ENCODE measurements at regions of chr1 and their contacts with region 1.

Region 1: GRCh38 chr1:153727463-153728304 is at the start of gene INTS3:
- DNase-seq: peak; percentile 98 to 100 (median 100)
- H3K4me3 ChIP-seq: peak within 1 kb of the TSS; percentile 61 to 99 (median 91)
- H3K27ac ChIP-seq: peak within 1 kb of the TSS; percentile 71 to 99 (median 96)
- H3K27me3 ChIP-seq: no peaks in the 10 kb centered on the region
- CTCF ChIP-seq: peak in 26 of 56 donors; percentile 7 to 50 (median 26)
- total RNA-seq, gene INTS3: 56.8 to 103 (median 74.9) TPM

Region 2: GRCh38 chr1:153633716-153634665 is 93.7 kb before region 1 on chr1 and contains the start of gene CHTOP:
- intact Hi-C with region 1: loop called in 1 of 2 experiments (anchors 5 kb)
- DNase-seq: peak; percentile 97 to 99 (median 99)
- H3K4me3 ChIP-seq: peak within 1 kb of the TSS; percentile 72 to 100 (median 93)
- H3K27ac ChIP-seq: peak within 1 kb of the TSS; percentile 80 to 100 (median 99)
- H3K27me3 ChIP-seq: no peaks in the 10 kb centered on the region
- CTCF ChIP-seq: peak in 36 of 56 donors; percentile 2 to 58 (median 24)
- total RNA-seq, gene CHTOP: 62.0 to 109 (median 76.4) TPM

Region 3: GRCh38 chr1:153775458-153776327 is 48.0 kb after region 1 on chr1:
- intact Hi-C with region 1: loop called in 1 of 2 experiments (anchors 2 kb)
- DNase-seq: peak in 5 of 10 donors; percentile 42 to 72 (median 50)
- H3K4me3 ChIP-seq: peak overlapping the region; percentile 54 to 90 (median 74)
- H3K27ac ChIP-seq: peak overlapping the region; percentile 5 to 92 (median 82)
- H3K27me3 ChIP-seq: no peaks in the 10 kb centered on the region
- CTCF ChIP-seq: peak in 2 of 56 donors; percentile 2 to 12

Region 4: DNA sequence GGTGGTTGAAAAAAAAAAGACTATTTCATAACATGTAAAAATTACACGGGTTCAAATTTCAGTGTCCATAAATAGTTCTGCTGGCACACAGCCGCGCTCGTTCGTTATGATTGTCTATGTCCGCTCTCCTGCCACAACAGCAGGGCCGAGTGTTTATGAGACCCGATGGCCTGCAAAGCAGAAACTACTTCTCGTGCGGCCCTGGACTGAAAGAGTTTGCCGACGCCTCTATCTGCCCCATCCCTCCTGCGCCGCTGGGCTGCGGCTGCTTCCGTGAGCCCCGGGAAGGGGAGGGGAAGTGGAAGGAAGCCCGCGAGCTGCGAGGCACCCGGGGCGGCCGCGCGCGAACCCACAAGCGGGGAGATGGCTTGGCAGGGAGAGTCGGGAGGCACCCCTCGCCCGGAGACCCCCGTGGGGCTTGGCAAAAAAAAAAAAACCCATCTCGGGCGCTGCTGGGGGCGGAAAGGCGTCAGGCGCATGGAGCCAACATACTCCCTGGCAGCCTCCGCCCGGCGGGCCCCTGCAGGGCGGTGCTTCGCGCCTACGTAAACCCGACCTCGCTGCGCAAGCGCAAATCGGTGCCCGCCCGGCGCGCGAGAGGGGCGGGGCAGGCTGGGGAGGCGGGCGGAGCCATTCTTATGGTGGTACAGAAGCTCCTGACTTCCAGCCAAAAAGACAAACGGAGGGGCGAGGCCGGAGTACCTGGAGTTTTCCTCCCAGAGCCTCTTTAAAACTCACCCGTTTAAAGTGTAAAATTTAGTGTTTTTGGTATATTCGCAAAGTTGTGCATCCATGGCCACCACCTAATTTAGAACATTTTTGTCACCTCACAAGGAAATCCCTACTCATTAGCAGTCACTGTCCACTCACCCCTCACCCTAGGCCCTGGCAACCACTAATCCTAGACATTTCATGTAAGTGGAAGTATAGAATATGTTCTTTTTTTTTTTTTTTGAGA is 55.8 kb after region 1 on chr1:
- intact Hi-C with region 1: loop called in 1 of 2 experiments (anchors 1 kb)
- DNase-seq: peak; percentile 81 to 96 (median 86)
- H3K4me3 ChIP-seq: peak overlapping the region; percentile 52 to 100 (median 78)
- H3K27ac ChIP-seq: peak overlapping the region; percentile 76 to 100 (median 97)
- H3K27me3 ChIP-seq: no peaks in the 10 kb centered on the region
- CTCF ChIP-seq: peak in 38 of 56 donors; percentile 7 to 54 (median 24)

Region 5: GRCh38 chr1:153922972-153923925 is 195.6 kb after region 1 on chr1 and contains the start of gene GATAD2B:
- intact Hi-C with region 1: no loop called
- DNase-seq: peak; percentile 98 to 100 (median 99)
- H3K4me3 ChIP-seq: peak within 1 kb of the TSS; percentile 55 to 95 (median 82)
- H3K27ac ChIP-seq: peak within 1 kb of the TSS; percentile 76 to 98 (median 95)
- H3K27me3 ChIP-seq: no peaks in the 10 kb centered on the region
- CTCF ChIP-seq: peak in 19 of 56 donors; percentile 4 to 50 (median 26)
- total RNA-seq, gene GATAD2B: 55.8 to 101 (median 81.7) TPM

Measured in dorsolateral prefrontal cortex (tissue), 120 donors.